GM10248 (cell line): ENCODE measurements at regions of chr14 and their contacts with region 1.

Region 1: GRCh38 chr14:91233936-91234790 is 10.3 kb downstream of the GPR68 start:
- DNase-seq: no peak
- CTCF ChIP-seq: no peak

Region 2: DNA sequence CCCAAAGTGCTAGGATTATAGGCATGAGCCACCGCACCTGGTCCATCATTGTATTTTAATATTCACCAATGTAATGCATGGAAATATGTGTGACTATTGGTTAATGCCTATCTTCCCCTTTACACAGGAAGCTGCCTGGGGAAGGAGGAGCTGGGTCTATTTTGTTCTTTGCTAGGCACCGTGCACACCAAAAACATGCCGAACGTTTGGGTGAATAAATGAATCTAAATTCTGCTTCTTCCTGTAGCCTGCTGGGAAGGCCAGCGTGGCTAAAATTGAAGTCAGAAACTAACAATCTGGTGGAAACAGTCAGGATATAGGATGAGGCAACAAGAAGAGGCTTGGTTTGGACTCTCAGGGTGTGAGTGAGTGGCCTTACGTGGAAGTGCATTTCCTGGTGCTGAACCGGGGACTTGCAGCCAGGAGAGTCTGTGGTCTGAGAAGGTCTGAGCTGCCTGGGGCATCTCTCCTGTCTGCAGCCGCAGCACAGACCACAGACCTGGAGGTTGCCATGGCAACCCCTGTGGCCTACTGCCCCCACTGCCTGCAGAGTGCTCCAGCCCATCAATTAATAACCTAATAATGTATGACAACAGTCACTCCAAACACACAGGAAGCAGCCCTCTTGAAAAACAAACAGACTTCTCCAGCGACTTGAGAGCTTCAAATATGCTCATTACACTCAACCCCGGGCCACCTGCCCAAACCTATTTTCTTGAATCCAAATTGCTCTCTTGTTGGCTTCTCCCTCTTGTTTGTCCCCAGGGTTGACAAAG is 15.9 kb after region 1 on chr14:
- CTCF ChIA-PET with region 1: interaction called, 10 read pairs
- POLR2A ChIA-PET with region 1: no interaction called
- DNase-seq: peak; percentile 82
- CTCF ChIP-seq: no peak